Activated B cell treated with CpG ODN at 0.5 μM for 24 hours (primary cell): ENCODE measurements at regions of chr5 and their contacts with region 1.

Region 1: GRCh38 chr5:134041570-134042411 is 37.0 kb upstream of the VDAC1 start:
- DNase-seq: no peak
- ATAC-seq: no peak
- H3K4me3 Mint-ChIP-seq: no peak overlapping the region
- H3K27ac Mint-ChIP-seq: no peak overlapping the region
- H3K4me1 Mint-ChIP-seq: peaks cover 4% of the 10 kb centered on the region
- H3K27me3 Mint-ChIP-seq: no peaks in the 10 kb centered on the region
- CTCF ChIP-seq: no peak

Region 2: GRCh38 chr5:134004592-134005375 is 37.0 kb before region 1 on chr5 and contains the start of gene VDAC1:
- CTCF ChIA-PET with region 1: interaction called, 19 read pairs
- POLR2A ChIA-PET with region 1: interaction called, 8 read pairs
- intact Hi-C with region 1: loop called (anchors 2 kb)
- DNase-seq: peak; percentile 81
- ATAC-seq: peak; percentile 82
- H3K4me3 Mint-ChIP-seq: peak within 1 kb of the TSS; percentile 92
- H3K27ac Mint-ChIP-seq: peak within 1 kb of the TSS; percentile 93
- H3K4me1 Mint-ChIP-seq: peaks cover 38% of the 10 kb centered on the region
- H3K27me3 Mint-ChIP-seq: no peaks in the 10 kb centered on the region
- CTCF ChIP-seq: no peak
- total RNA-seq, gene VDAC1: 158 and 164 TPM in 2 replicates

Region 3: GRCh38 chr5:134113902-134114875 is 72.4 kb after region 1 on chr5 and contains the start of gene TCF7:
- CTCF ChIA-PET with region 1: interaction called, 11 read pairs
- POLR2A ChIA-PET with region 1: no interaction called
- intact Hi-C with region 1: no loop called
- DNase-seq: peak; percentile 61
- ATAC-seq: peak; percentile 91
- H3K4me3 Mint-ChIP-seq: peak within 1 kb of the TSS; percentile 90
- H3K27ac Mint-ChIP-seq: peak within 1 kb of the TSS; percentile 81
- H3K4me1 Mint-ChIP-seq: peaks cover 24% of the 10 kb centered on the region
- H3K27me3 Mint-ChIP-seq: peaks cover 10% of the 10 kb centered on the region
- CTCF ChIP-seq: no peak
- total RNA-seq, gene TCF7: 13.2 and 15.8 TPM in 2 replicates

Region 4: GRCh38 chr5:134145779-134146581 is 104.2 kb after region 1 on chr5:
- CTCF ChIA-PET with region 1: interaction called, 502 read pairs
- POLR2A ChIA-PET with region 1: interaction called, 26 read pairs
- intact Hi-C with region 1: loop called (anchors 1 kb)
- DNase-seq: peak; percentile 76
- ATAC-seq: peak; percentile 96
- H3K4me3 Mint-ChIP-seq: no peak overlapping the region
- H3K27ac Mint-ChIP-seq: peak overlapping the region; percentile 7
- H3K4me1 Mint-ChIP-seq: peaks cover 10% of the 10 kb centered on the region
- H3K27me3 Mint-ChIP-seq: no peaks in the 10 kb centered on the region
- CTCF ChIP-seq: peak; percentile 80

Region 5: DNA sequence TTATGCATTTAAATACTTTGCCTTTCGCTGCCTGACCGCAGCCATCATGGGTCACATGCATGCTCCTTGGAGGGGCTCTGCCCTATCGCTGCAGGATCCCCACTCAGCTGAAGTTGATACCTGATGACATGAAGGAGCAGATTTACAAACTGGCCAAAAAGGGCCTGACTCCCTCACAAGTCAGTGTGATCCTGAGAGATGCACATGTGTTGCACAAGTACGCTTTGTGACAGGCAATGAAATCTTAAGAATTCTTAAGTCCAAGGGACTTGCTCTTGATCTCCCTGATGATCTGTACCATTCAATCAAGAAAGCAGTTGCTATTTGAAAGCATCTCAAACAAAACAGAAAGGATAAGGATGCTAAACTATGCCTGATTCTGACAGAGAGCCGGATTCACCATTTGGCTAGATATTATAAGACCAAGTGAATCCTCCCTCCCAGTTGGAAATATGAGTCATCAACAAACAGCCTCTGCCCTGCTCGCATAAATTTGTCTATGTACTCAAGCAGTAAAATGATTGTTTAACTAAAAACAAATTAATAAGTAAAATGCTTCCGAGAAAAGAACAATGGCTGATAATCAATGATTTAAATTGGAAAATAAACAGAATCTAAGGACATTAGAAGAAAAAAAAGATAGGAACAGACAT is 225.7 kb after region 1 on chr5:
- CTCF ChIA-PET with region 1: no interaction called
- POLR2A ChIA-PET with region 1: no interaction called
- intact Hi-C with region 1: no loop called
- DNase-seq: no peak
- ATAC-seq: no peak
- H3K4me3 Mint-ChIP-seq: no peak overlapping the region
- H3K27ac Mint-ChIP-seq: no peak overlapping the region
- H3K4me1 Mint-ChIP-seq: no peaks in the 10 kb centered on the region
- H3K27me3 Mint-ChIP-seq: peaks cover 6% of the 10 kb centered on the region
- CTCF ChIP-seq: no peak

Region 6: DNA sequence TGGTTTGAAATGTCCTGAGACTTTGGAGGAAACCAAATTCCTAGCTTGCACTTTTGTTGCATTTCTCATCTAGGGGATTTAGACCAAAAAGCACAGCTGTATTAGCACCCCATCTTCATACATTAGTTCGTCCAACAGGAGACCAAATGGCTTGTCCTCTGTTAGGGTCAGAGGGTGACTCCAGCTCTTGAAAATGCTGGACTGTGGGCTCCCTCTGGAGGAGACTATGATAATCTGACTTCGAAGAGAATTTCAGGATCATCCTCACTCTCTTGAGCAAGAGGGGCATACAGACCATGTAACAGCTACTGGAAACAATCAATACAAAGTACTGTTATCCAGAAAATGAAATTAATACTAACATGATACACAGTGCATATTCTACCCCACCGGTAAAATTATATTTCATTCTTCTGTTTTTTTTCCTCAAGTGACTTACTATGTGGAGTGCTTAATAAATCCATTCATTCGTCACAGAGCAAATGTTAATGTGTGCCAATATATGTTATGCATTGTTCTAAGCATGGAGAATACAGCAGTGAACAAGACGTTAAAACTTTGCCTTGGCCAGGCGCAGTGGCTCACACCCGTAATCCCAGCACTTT is 247.8 kb after region 1 on chr5:
- CTCF ChIA-PET with region 1: interaction called, 7 read pairs
- POLR2A ChIA-PET with region 1: no interaction called
- intact Hi-C with region 1: loop called (anchors 1 kb)
- DNase-seq: no peak
- ATAC-seq: peak; percentile 68
- H3K4me3 Mint-ChIP-seq: no peak overlapping the region
- H3K27ac Mint-ChIP-seq: no peak overlapping the region
- H3K4me1 Mint-ChIP-seq: no peaks in the 10 kb centered on the region
- H3K27me3 Mint-ChIP-seq: peaks cover 5% of the 10 kb centered on the region
- CTCF ChIP-seq: no peak